Activated B cell treated with CpG ODN at 0.5 μM for 24 hours (primary cell): ENCODE measurements at regions of chr2 and their contacts with region 1.

Region 1: GRCh38 chr2:230268606-230269243 is 43.2 kb downstream of the SP140 start:
- DNase-seq: no peak
- ATAC-seq: no peak
- H3K4me3 Mint-ChIP-seq: peak overlapping the region; percentile 60
- H3K27ac Mint-ChIP-seq: peak overlapping the region; percentile 92
- H3K4me1 Mint-ChIP-seq: peaks cover 81% of the 10 kb centered on the region
- H3K27me3 Mint-ChIP-seq: no peaks in the 10 kb centered on the region
- CTCF ChIP-seq: no peak

Region 2: GRCh38 chr2:229660951-229661350 is 607.8 kb before region 1 on chr2:
- CTCF ChIA-PET with region 1: no interaction called
- POLR2A ChIA-PET with region 1: no interaction called
- intact Hi-C with region 1: no loop called
- DNase-seq: no peak
- ATAC-seq: no peak
- H3K4me3 Mint-ChIP-seq: no peak overlapping the region
- H3K27ac Mint-ChIP-seq: no peak overlapping the region
- H3K4me1 Mint-ChIP-seq: peaks cover 3% of the 10 kb centered on the region
- H3K27me3 Mint-ChIP-seq: peaks cover 8% of the 10 kb centered on the region
- CTCF ChIP-seq: no peak

Region 3: GRCh38 chr2:230219419-230220331 is 49.0 kb before region 1 on chr2 and contains the start of gene SP110:
- CTCF ChIA-PET with region 1: no interaction called
- POLR2A ChIA-PET with region 1: interaction called, 38 read pairs
- intact Hi-C with region 1: no loop called
- DNase-seq: peak; percentile 61
- ATAC-seq: peak; percentile 73
- H3K4me3 Mint-ChIP-seq: peak within 1 kb of the TSS; percentile 96
- H3K27ac Mint-ChIP-seq: peak within 1 kb of the TSS; percentile 97
- H3K4me1 Mint-ChIP-seq: peaks cover 90% of the 10 kb centered on the region
- H3K27me3 Mint-ChIP-seq: no peaks in the 10 kb centered on the region
- CTCF ChIP-seq: no peak
- total RNA-seq, gene SP110: 139 and 147 TPM in 2 replicates

Region 4: DNA sequence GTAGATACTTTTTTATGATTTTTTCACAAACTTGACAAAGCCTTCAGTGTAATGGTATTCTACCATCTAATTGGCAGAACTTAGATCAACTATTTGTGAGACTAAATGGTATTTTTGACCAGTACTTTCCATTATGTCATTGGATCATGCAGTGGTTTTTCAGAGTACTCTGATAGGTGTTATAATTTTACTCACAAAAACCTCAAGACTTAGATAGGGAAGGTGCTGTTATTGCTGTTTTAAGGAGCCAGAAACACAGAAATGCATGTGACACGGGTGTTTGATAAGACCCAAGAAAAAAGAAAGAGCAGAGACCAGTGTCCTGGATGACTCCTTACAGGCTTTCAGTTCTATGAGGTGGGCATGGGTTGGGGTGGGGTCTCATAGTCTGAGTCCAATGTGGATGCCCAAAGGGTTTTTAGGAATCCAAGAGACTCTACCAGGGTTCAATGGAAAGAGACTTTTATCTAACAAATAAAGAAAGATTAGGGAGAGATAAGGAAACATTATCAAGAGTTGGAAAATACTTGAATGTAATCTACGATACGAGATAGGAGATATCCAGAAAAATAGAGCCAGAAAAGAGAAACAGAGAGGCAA is 11.9 kb before region 1 on chr2:
- CTCF ChIA-PET with region 1: interaction called, 6 read pairs
- POLR2A ChIA-PET with region 1: interaction called, 41 read pairs
- intact Hi-C with region 1: loop called (anchors 1 kb)
- DNase-seq: no peak
- ATAC-seq: no peak
- H3K4me3 Mint-ChIP-seq: peak overlapping the region; percentile 50
- H3K27ac Mint-ChIP-seq: peak overlapping the region; percentile 89
- H3K4me1 Mint-ChIP-seq: peaks cover 46% of the 10 kb centered on the region
- H3K27me3 Mint-ChIP-seq: no peaks in the 10 kb centered on the region
- CTCF ChIP-seq: no peak

Region 5: DNA sequence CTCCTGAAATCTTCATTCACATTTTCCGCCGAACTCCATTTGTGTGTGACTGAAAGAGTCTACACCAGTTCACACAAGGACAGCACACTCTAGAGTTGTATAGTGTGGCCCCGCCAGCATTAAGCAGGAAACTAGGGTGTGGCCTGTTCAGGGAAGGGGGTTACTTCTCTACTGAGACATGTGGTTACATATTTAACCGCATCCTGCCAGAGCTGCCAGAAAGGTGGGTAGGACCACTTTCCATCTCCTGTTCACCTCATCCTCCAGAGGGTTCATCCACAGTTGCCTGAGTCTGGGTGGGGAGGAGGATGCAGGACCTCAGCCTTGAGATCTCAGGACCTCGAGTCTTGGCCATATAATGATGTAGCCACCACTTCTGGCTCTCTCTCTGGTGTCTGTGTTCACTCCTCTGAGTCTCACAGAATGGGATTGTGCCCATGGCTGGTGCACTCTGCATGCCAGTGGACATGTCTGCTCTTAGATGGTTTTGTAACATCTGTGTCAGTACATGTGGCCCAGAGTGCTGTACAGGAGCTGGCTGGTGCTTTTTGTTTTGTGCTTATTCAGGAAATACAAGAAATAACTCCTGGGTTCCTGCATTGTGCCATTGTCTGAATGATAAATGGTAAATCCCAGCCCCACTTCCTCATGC is 50.6 kb after region 1 on chr2:
- CTCF ChIA-PET with region 1: no interaction called
- POLR2A ChIA-PET with region 1: interaction called, 5 read pairs
- intact Hi-C with region 1: loop called (anchors 2 kb)
- DNase-seq: no peak
- ATAC-seq: peak; percentile 86
- H3K4me3 Mint-ChIP-seq: peak overlapping the region; percentile 56
- H3K27ac Mint-ChIP-seq: peak overlapping the region; percentile 90
- H3K4me1 Mint-ChIP-seq: peaks cover 78% of the 10 kb centered on the region
- H3K27me3 Mint-ChIP-seq: no peaks in the 10 kb centered on the region
- CTCF ChIP-seq: no peak

Region 6: GRCh38 chr2:230326453-230327417 is 58.0 kb after region 1 on chr2 and contains the start of gene SP140L:
- CTCF ChIA-PET with region 1: no interaction called
- POLR2A ChIA-PET with region 1: interaction called, 10 read pairs
- intact Hi-C with region 1: no loop called
- DNase-seq: peak; percentile 60
- ATAC-seq: peak; percentile 95
- H3K4me3 Mint-ChIP-seq: peak within 1 kb of the TSS; percentile 96
- H3K27ac Mint-ChIP-seq: peak within 1 kb of the TSS; percentile 99
- H3K4me1 Mint-ChIP-seq: peaks cover 79% of the 10 kb centered on the region
- H3K27me3 Mint-ChIP-seq: no peaks in the 10 kb centered on the region
- CTCF ChIP-seq: no peak
- total RNA-seq, gene SP140L: 106 and 112 TPM in 2 replicates

Region 7: DNA sequence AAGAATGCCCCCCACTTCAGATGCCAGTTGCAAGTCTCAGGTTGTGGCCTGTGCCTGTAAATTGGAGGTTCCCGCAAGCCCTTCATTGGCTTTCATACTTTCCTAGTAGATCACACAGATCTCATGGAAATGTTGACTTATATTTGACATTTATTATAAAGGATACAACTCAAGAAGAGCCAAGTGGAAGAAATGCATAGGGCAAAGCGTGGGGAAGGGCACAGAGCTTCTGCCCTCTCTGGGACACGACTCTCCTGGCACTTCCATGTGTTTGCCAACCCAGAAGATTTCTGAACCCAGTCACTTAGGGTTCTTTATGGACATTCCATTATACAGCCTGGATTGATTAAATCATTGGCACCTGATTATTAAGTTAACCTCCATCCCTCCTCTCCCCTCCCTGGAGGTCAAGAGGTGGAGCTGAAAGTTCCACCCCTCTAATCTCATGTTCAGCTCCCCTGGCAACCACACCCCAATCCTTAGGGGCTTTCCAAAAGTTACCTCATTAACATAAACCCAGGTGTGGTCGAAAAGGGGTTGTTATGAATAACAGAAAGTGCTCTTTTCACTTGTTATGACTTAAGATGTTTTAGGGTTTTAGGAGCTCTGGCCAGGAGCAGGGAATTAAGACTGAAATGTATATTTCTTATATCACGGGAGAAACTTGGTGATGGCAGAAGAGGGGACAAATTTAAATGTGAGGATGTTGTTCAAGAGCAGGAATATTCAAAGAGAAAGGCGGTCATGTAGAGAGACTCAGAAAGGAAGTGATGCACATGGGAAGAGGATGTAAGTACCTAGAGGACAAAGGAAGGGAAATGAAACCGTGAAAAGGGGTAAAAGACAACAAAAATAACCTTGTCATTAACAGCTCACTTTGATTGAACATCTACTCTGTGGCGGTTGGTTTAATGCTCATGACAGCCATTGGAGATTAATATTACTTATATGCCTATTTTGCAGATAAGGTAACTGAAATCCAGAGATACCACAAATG is 179.0 kb after region 1 on chr2:
- CTCF ChIA-PET with region 1: no interaction called
- POLR2A ChIA-PET with region 1: interaction called, 7 read pairs
- intact Hi-C with region 1: loop called (anchors 2 kb)
- DNase-seq: no peak
- ATAC-seq: peak; percentile 81
- H3K4me3 Mint-ChIP-seq: peak overlapping the region; percentile 83
- H3K27ac Mint-ChIP-seq: peak overlapping the region; percentile 99
- H3K4me1 Mint-ChIP-seq: peaks cover 93% of the 10 kb centered on the region
- H3K27me3 Mint-ChIP-seq: no peaks in the 10 kb centered on the region
- CTCF ChIP-seq: no peak